ENCODE measurements at regions of chr11 and their contacts with region 1.

Region 1: GRCh38 chr11:63478896-63479295 is 12.1 kb downstream of the PLAAT5 start:
- DNase-seq: peak; percentile 50
- H3K4me3 ChIP-seq: no peak overlapping the region
- H3K27ac ChIP-seq: no peak overlapping the region
- H3K4me1 ChIP-seq: no peaks in the 10 kb centered on the region
- H3K27me3 ChIP-seq: no peaks in the 10 kb centered on the region
- CTCF ChIP-seq: peak; percentile 68 to 93 (median 86)
- POLR2A ChIP-seq: no peak

Region 2: DNA sequence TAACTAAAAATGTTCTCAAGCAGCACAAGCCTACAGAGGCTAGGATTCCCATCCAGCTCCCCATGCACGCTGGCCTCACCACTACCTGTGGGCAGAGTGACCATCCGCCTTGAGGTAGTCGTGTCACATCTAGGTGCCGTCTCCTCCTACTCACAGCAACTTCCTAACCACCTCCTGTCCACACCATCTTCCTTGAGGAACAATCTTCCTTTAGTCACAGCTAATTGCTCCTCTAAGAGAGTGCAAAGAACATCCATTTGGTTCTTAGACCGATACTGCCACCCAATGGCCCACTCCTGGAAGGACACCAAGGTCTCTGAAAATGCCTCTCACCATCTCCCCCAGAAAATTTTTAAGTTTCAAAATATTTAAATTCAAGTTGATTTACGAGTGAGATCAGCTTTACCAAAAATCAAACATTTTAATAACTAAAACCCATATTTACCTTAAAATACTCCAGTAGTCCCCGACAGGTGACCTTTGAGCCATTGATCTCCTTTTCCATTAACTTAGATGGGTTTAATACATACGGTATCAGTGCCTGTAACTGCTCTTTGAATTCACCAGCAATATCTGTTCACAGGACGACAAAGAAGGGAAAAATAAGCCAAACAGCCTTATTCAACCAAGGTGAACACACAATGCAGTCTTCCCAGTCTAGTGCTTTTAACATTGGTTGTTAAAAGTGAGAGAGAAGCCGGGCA is 157.0 kb after region 1 on chr11:
- intact Hi-C with region 1: loop called (anchors 2 kb)
- DNase-seq: peak; percentile 48
- H3K4me3 ChIP-seq: no peak overlapping the region
- H3K27ac ChIP-seq: no peak overlapping the region
- H3K4me1 ChIP-seq: no peaks in the 10 kb centered on the region
- H3K27me3 ChIP-seq: no peaks in the 10 kb centered on the region
- CTCF ChIP-seq: peak in 3 of 4 experiments; percentile 66 to 84 (median 79)
- POLR2A ChIP-seq: no peak

Region 3: DNA sequence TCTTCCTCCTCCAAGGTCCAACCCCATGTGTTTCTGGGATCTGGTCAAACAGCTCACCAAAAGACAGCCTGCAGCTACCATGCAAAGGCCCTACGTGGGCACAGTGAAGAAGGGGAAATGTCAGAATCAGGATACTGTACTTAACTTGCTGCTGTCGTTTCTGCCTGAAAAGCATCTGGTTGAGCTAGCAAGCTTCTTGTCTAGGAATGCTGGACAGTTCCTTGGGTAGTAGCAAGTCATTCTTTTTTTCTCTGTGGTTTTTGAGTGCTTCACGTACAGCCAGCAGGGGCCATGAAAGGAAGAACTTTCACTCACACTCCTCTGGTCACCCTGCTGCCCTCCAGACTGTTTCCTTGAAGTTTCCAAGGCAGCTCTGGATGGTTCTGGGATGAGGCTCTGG is 413.3 kb after region 1 on chr11:
- intact Hi-C with region 1: no loop called
- DNase-seq: no peak
- H3K4me3 ChIP-seq: no peak overlapping the region
- H3K27ac ChIP-seq: no peak overlapping the region
- H3K4me1 ChIP-seq: peaks cover 18% of the 10 kb centered on the region
- H3K27me3 ChIP-seq: no peaks in the 10 kb centered on the region
- CTCF ChIP-seq: no peak
- POLR2A ChIP-seq: no peak